PC-3 (cell line): ENCODE measurements at regions of chr1 and their contacts with region 1.

Region 1: GRCh38 chr1:170545476-170545875 is 13.5 kb downstream of the GORAB start:
- DNase-seq: peak; percentile 78
- ATAC-seq: peak; percentile 89
- H3K4me3 ChIP-seq: no peak overlapping the region
- H3K27ac ChIP-seq: peak overlapping the region; percentile 42
- H3K4me1 ChIP-seq: peaks cover 14% of the 10 kb centered on the region
- H3K27me3 ChIP-seq: no peaks in the 10 kb centered on the region
- CTCF ChIP-seq: no peak

Region 2: GRCh38 chr1:170562646-170563338 is 17.3 kb after region 1 on chr1:
- CTCF ChIA-PET with region 1: no interaction called
- POLR2A ChIA-PET with region 1: interaction called, 4 read pairs
- intact Hi-C with region 1: loop called (anchors 1 kb)
- DNase-seq: peak; percentile 95
- ATAC-seq: peak; percentile 97
- H3K4me3 ChIP-seq: peak overlapping the region; percentile 36; the same call in 1 of the 2 replicates
- H3K27ac ChIP-seq: peak overlapping the region; percentile 44
- H3K4me1 ChIP-seq: peaks cover 16% of the 10 kb centered on the region
- H3K27me3 ChIP-seq: no peaks in the 10 kb centered on the region
- CTCF ChIP-seq: no peak

Region 3: DNA sequence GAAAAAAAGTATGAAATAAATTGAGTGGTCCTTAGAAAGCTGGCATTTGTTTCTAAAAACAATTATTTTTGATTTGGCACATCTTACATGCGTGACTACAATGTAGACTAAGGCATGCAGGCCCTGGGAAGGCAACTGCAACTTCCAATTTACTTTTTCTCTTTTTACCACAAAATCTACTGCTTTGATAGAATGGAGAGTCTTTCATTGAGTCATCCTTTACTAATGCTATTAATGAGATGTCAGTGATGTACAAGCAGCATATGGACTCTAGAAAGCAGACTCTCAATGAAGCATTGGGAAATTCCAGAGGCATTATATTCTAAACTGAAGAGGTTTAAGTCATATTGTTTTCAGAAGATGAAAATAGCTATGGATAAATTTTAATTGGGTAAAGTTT is 88.8 kb after region 1 on chr1:
- CTCF ChIA-PET with region 1: no interaction called
- POLR2A ChIA-PET with region 1: no interaction called
- intact Hi-C with region 1: no loop called
- DNase-seq: peak; percentile 11
- ATAC-seq: no peak
- H3K4me3 ChIP-seq: no peak overlapping the region
- H3K27ac ChIP-seq: no peak overlapping the region
- H3K4me1 ChIP-seq: no peaks in the 10 kb centered on the region
- H3K27me3 ChIP-seq: no peaks in the 10 kb centered on the region
- CTCF ChIP-seq: no peak